Calu3 (cell line): ENCODE measurements at regions of chr13 and their contacts with region 1.

Region 1: GRCh38 chr13:51895906-51896888 is 34.4 kb downstream of the CCDC70 start:
- DNase-seq: peak; percentile 61
- H3K4me3 Mint-ChIP-seq: no peak overlapping the region
- H3K27ac Mint-ChIP-seq: no peak overlapping the region
- H3K4me1 Mint-ChIP-seq: no peaks in the 10 kb centered on the region
- H3K27me3 Mint-ChIP-seq: peaks cover 46% of the 10 kb centered on the region
- CTCF ChIP-seq: no peak

Region 2: GRCh38 chr13:51803422-51804294 is 92.5 kb before region 1 on chr13 and contains the start of gene DHRS12:
- CTCF ChIA-PET with region 1: no interaction called
- intact Hi-C with region 1: no loop called
- DNase-seq: peak; percentile 80
- H3K4me3 Mint-ChIP-seq: peak within 1 kb of the TSS; percentile 68
- H3K27ac Mint-ChIP-seq: peak within 1 kb of the TSS; percentile 60
- H3K4me1 Mint-ChIP-seq: peaks cover 10% of the 10 kb centered on the region
- H3K27me3 Mint-ChIP-seq: no peaks in the 10 kb centered on the region
- CTCF ChIP-seq: no peak
- total RNA-seq, gene DHRS12: 8.1 and 8.4 TPM in 2 replicates

Region 3: DNA sequence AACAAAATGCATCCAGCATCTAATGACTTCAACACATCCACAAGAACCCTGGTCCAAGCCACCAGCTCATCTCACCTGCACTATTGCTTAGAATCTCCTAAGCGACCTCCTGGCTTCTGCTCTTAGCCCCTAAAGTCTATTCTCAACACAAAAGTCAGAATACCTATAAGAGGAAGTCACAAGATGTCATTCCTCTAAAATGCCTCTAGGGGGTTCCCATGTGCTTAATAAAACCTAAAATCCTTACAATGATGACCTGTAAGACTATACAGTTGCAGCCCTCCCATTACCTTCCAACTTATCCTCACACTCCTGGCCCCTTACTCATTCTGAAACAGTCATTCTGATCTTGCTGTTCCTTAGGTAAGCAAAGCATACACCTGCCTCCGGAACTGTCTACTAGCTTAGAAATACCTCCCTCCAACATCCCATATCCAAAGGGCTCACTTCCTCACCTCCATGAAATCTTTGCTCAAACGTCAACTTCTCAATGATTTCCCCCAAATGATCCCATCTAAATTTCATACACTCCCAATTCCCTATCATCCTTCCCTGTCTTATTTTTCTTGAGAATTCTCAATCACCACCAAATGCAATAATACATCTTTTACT is 105.0 kb after region 1 on chr13:
- CTCF ChIA-PET with region 1: no interaction called
- intact Hi-C with region 1: loop called (anchors 10 kb)
- DNase-seq: no peak
- H3K4me3 Mint-ChIP-seq: no peak overlapping the region
- H3K27ac Mint-ChIP-seq: no peak overlapping the region
- H3K4me1 Mint-ChIP-seq: peaks cover 37% of the 10 kb centered on the region
- H3K27me3 Mint-ChIP-seq: peaks cover 36% of the 10 kb centered on the region
- CTCF ChIP-seq: peak; percentile 39

Region 4: GRCh38 chr13:52127783-52128702 is 231.8 kb after region 1 on chr13:
- CTCF ChIA-PET with region 1: interaction called, 8 read pairs
- intact Hi-C with region 1: loop called (anchors 1 kb)
- DNase-seq: peak; percentile 67
- H3K4me3 Mint-ChIP-seq: peak overlapping the region; percentile 82
- H3K27ac Mint-ChIP-seq: no peak overlapping the region
- H3K4me1 Mint-ChIP-seq: no peaks in the 10 kb centered on the region
- H3K27me3 Mint-ChIP-seq: no peaks in the 10 kb centered on the region
- CTCF ChIP-seq: peak; percentile 41

Region 5: DNA sequence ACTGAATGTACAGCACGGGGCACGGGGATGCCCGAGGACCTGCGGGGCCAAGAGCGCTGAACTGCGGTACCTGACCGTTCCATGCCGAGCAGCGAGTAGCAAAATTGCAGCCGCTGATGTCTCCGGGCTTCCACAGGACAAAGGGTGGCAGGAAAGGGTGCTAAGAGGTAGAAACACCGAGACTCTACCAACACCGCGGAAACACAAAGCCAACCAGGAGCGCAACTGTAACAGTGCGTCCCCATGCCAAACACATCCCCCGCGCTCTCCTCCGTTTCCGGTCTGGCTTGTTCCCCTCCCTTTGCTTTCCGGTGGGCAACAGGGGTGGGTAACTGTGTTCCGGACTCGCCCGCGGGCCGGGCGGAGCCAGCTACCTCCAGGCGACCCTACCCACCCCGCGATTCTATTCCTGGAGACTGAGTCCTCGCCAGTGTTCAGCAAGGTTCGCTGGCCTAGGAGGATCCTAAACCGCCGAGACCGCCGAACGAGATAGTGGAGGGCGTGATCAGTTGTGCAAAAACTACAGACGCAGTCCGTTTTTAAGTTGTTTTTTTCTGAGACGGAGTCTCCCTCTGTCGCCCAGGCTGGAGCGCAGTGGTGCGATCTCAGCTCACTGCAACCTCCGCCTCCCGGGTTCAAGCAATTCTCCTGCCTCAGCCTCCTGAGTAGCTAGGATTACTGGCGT is 298.1 kb after region 1 on chr13:
- CTCF ChIA-PET with region 1: no interaction called
- intact Hi-C with region 1: loop called (anchors 2 kb)
- DNase-seq: peak; percentile 86
- H3K4me3 Mint-ChIP-seq: peak overlapping the region; percentile 78
- H3K27ac Mint-ChIP-seq: peak overlapping the region; percentile 56
- H3K4me1 Mint-ChIP-seq: no peaks in the 10 kb centered on the region
- H3K27me3 Mint-ChIP-seq: no peaks in the 10 kb centered on the region
- CTCF ChIP-seq: no peak